B cell (primary cell): ENCODE measurements at regions of chr11 and their contacts with region 1.

Region 1: GRCh38 chr11:65662799-65663638 is at the start of gene RELA:
- DNase-seq: peak; percentile 94
- ATAC-seq: peak; percentile 86
- H3K4me3 ChIP-seq: peak within 1 kb of the TSS; percentile 85 to 99 (median 95)
- H3K4me3 Mint-ChIP-seq: peak within 1 kb of the TSS; percentile 89
- H3K27ac ChIP-seq: peak within 1 kb of the TSS; percentile 97 to 100
- H3K27ac Mint-ChIP-seq: peak within 1 kb of the TSS; percentile 94
- H3K4me1 ChIP-seq: peaks cover 19 to 32% of the 10 kb centered on the region in 2 donors
- H3K4me1 Mint-ChIP-seq: peaks cover 31% of the 10 kb centered on the region
- H3K27me3 ChIP-seq: no peaks in the 10 kb centered on the region
- H3K27me3 Mint-ChIP-seq: no peaks in the 10 kb centered on the region
- CTCF ChIP-seq: no peak
- total RNA-seq, gene RELA: 154 and 160 TPM in 2 replicates

Region 2: GRCh38 chr11:65637794-65638317 is 25.2 kb before region 1 on chr11 and contains the start of gene SIPA1:
- CTCF ChIA-PET with region 1: interaction called, 15 read pairs
- POLR2A ChIA-PET with region 1: interaction called, 52 read pairs
- intact Hi-C with region 1: loop called (anchors 1 kb)
- DNase-seq: peak; percentile 88
- ATAC-seq: peak; percentile 32
- H3K4me3 ChIP-seq: peak within 1 kb of the TSS; percentile 70 to 97 (median 93)
- H3K4me3 Mint-ChIP-seq: peak within 1 kb of the TSS; percentile 99
- H3K27ac ChIP-seq: peak within 1 kb of the TSS; percentile 100
- H3K27ac Mint-ChIP-seq: peak within 1 kb of the TSS; percentile 98
- H3K4me1 ChIP-seq: peaks cover 37 to 66% of the 10 kb centered on the region in 2 donors
- H3K4me1 Mint-ChIP-seq: peaks cover 42% of the 10 kb centered on the region
- H3K27me3 ChIP-seq: no peaks in the 10 kb centered on the region
- H3K27me3 Mint-ChIP-seq: no peaks in the 10 kb centered on the region
- CTCF ChIP-seq: no peak
- total RNA-seq, gene SIPA1: 448 and 461 TPM in 2 replicates

Region 3: GRCh38 chr11:65652511-65653231 is 10.3 kb before region 1 on chr11:
- CTCF ChIA-PET with region 1: interaction called, 18 read pairs
- POLR2A ChIA-PET with region 1: interaction called, 56 read pairs
- intact Hi-C with region 1: loop called (anchors 1 kb)
- DNase-seq: peak; percentile 98
- ATAC-seq: peak; percentile 89
- H3K4me3 ChIP-seq: peak overlapping the region; percentile 22 to 74 (median 69)
- H3K4me3 Mint-ChIP-seq: peak overlapping the region; percentile 96
- H3K27ac ChIP-seq: peak overlapping the region; percentile 90 to 93
- H3K27ac Mint-ChIP-seq: peak overlapping the region; percentile 98
- H3K4me1 ChIP-seq: peaks cover 22 to 44% of the 10 kb centered on the region in 2 donors
- H3K4me1 Mint-ChIP-seq: peaks cover 57% of the 10 kb centered on the region
- H3K27me3 ChIP-seq: no peaks in the 10 kb centered on the region
- H3K27me3 Mint-ChIP-seq: no peaks in the 10 kb centered on the region
- CTCF ChIP-seq: no peak

Region 4: DNA sequence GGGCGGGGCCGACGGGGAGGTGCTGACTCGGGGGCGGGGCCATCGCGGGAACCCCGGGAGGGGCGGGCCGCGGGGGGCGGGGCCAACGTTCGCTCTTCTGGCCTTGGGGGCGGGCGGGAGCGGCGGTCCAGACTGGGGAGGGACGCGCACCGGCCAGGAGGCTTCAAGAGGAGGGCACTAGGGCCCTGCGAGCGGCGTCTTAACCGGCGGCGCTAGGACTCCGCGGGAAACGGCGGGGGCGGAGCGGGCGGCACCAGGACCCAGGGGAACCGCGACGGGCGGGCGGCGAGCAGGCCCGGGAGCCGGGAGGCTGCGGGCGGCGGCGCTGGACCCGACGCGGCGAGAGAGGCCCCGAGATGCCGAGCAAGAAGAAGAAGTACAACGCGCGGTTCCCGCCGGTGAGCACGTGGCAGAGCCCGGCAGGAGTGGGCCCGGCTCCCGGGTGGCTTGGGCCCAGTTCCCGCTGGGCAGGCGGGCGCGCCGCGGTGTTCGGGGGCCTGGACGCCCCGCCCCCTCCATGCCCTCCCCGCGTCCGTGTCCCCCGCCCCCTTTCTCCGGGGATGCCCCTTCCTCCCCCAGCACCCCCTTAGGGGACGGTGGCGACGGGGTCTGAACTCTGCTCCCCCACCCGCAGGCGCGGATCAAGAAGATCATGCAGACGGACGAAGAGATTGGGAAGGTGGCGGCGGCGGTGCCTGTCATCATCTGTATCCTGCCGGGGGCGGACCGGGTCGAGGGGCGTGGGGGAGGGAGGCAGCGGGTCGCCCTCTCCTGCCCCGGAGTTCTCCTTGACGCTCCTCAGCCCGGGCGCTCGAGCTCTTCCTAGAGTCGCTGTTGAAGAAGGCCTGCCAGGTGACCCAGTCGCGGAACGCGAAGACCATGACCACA is 256.4 kb after region 1 on chr11 and contains the start of gene DRAP1:
- CTCF ChIA-PET with region 1: no interaction called
- POLR2A ChIA-PET with region 1: interaction called, 3 read pairs
- intact Hi-C with region 1: loop called (anchors 1 kb)
- DNase-seq: peak; percentile 98
- ATAC-seq: peak; percentile 87
- H3K4me3 ChIP-seq: peak within 1 kb of the TSS; percentile 83 to 99 (median 93)
- H3K4me3 Mint-ChIP-seq: peak within 1 kb of the TSS; percentile 95
- H3K27ac ChIP-seq: peak within 1 kb of the TSS; percentile 66 to 85
- H3K27ac Mint-ChIP-seq: peak within 1 kb of the TSS; percentile 89
- H3K4me1 ChIP-seq: peaks cover 19 to 50% of the 10 kb centered on the region in 2 donors
- H3K4me1 Mint-ChIP-seq: peaks cover 44% of the 10 kb centered on the region
- H3K27me3 ChIP-seq: no peaks in the 10 kb centered on the region
- H3K27me3 Mint-ChIP-seq: no peaks in the 10 kb centered on the region
- CTCF ChIP-seq: no peak
- total RNA-seq, gene DRAP1: 62.9 and 71.7 TPM in 2 replicates